Left ventricle myocardium superior (tissue), 1 donor: ENCODE measurements at regions of chr3 and their contacts with region 1.

Region 1: DNA sequence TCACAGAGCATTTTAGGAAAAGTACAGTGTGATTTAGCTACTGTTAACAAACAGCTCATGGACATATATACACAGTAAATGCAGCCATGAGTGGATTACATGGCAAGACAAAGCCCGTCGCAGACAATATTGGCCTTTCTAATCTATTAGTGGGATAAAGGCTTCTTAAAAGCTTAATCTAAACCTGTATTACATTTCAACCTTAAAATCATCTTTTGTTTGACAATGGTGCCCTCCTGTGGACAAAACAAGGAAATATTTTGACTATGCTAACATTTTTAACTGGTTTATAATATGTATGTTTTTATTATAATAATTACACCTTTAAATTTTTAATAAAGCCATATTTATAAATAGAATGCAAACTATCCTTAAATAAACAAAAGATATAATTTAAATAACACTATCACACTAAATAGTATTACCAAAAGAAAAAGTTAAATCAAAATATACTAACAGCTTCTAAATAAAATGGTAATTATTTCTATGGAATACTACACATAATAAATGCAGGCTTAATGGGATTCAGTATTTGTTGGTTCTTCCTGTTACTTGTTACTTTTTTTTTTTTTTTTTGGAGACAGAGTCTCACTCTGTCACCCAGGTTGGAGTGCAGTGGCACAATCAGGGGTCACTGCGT is 38.6 kb downstream of the TAFA4 start:
- DNase-seq: no peak
- ATAC-seq: no peak

Region 2: GRCh38 chr3:67377299-67377698 is 1516.4 kb before region 1 on chr3:
- intact Hi-C with region 1: loop called (anchors 5 kb)
- DNase-seq: no peak
- ATAC-seq: no peak

Region 3: DNA sequence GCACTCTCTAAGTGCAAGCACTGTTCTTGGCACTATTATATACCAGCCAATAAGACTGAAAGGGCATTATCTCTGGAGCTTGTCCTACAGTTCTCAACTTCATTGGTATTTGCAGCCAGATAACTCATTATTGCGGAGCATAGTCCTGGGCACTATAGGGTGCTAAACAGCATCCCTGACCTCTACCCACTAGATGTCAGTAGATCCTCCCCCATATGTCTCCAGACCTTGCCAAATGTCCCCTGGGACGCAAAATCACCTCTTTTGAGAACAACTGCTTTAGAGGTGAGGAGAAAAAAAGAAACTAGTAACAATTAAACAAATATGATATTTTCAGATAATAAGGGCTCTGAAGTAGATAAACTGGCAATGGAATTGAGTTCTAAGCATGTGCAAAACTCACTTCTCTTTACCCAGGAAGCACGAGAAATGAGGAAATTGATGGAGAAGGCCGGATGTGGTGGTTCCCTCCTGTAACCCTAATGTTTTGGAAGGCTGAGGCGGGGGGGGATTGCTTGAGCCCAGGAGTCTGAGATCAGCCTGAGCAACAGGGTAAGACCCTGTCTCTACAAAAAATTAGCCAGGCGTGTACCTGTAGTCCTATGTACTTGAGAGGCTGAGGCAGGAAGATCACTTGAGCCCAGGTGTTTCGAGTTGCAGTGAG is 430.8 kb after region 1 on chr3:
- intact Hi-C with region 1: no loop called
- DNase-seq: no peak
- ATAC-seq: peak; percentile 32

Region 4: DNA sequence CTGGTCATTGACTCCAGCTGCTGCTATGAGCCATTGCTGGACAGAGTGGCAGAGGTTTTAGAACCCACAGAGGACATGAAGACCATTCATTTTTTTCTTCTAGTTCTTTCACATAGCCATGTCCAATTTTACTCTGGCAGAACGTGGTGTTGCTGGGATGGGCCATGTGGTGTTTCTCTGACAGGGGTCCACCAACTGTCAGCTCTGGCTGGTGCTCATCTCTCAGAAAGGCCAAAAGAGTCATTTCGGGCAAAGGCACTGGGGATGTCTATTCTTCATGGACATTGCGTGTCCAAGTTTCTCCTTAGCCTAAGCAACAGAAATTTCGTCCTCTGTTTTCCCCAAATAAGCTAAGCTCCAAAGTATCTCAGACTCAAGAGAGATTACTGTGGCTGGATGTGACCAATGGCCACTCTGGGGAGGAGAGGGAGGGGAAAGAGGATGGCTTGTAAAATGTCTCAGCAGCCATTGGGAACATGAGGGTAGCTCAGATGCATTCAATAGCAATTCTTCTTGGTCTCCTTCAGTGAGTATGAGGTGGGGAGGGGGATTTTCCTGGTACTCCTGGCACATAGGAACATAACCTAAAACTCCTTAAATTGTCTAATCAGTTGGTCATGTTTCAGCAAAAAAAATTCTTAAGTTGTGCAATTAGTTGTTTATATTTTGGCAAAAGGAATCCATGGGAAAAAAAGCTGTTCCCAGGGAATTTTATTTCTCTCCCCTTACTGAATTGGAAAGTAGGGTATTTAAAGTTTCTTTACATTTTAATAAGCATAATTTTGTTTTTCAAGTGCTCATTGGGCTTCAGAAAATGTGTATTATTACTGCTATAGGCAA is 714.0 kb after region 1 on chr3:
- intact Hi-C with region 1: no loop called
- DNase-seq: no peak
- ATAC-seq: peak; percentile 41